ENCODE measurements at regions of chr2 and their contacts with region 1.

Region 1: GRCh38 chr2:47034973-47035609 is 119.5 kb upstream of the MCFD2 start:
- DNase-seq: peak in 1 of 5 donors; percentile 50
- H3K4me3 ChIP-seq: no peak overlapping the region
- H3K27ac ChIP-seq: peak overlapping the region; percentile 50 to 82
- H3K4me1 ChIP-seq: peaks cover 22% of the 10 kb centered on the region
- H3K27me3 ChIP-seq: no peaks in the 10 kb centered on the region
- CTCF ChIP-seq: no peak
- EP300 ChIP-seq: no peak
- POLR2A ChIP-seq: no peak

Region 2: DNA sequence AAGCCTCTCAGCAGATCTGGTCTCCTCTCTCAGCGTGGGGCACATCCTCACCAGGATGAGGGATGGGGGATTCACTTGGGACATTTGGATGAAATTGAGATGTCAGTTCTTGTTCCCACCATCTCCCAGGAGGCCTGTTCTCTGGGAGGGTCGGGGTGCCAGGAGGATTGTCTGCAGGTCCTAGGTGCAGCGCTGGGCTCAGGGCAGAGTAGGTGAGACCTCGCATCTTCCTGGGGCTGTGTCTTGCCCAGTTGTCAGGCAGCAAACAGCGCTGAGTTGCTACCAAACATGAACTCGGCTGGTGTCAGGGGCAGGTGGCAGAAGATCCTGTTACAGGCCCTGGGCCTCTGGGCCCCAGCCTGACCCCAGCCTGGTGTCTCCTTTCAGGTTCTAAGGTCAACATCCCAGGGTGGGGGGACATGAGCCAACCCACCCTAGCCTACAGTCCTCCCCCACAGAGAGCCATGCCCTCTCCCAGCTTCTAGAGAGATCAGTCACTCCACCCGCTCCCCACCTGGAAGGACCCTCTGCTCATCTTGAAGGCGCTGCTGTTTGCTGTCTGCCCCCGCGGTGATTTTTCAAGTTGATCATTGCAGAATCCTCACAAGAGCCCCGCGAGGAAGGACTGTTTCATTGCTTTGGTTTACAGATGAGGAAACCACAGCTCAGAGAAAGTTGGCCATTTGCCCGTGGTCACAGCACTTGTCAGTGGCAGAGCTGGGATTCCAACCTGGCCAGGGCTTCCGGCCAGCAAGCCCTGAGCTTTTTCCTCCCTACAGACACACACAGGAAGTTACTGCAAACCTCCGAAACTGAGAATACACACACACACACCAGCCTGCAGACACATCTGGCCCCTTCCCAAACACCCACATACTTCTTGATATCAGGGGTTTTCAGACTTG is 36.1 kb after region 1 on chr2:
- intact Hi-C with region 1: loop called in 1 of 4 experiments (anchors 5 kb)
- DNase-seq: peak; percentile 61 to 75 (median 66)
- H3K4me3 ChIP-seq: no peak overlapping the region
- H3K27ac ChIP-seq: peak overlapping the region; percentile 90 to 91
- H3K4me1 ChIP-seq: peaks cover 39% of the 10 kb centered on the region
- H3K27me3 ChIP-seq: no peaks in the 10 kb centered on the region
- CTCF ChIP-seq: no peak
- EP300 ChIP-seq: no peak
- POLR2A ChIP-seq: no peak

Region 3: GRCh38 chr2:47127862-47128543 is 92.9 kb after region 1 on chr2:
- intact Hi-C with region 1: no loop called
- DNase-seq: no peak
- H3K4me3 ChIP-seq: no peak overlapping the region
- H3K27ac ChIP-seq: no peak overlapping the region
- H3K4me1 ChIP-seq: no peaks in the 10 kb centered on the region
- H3K27me3 ChIP-seq: no peaks in the 10 kb centered on the region
- CTCF ChIP-seq: no peak
- EP300 ChIP-seq: no peak
- POLR2A ChIP-seq: no peak

Region 4: GRCh38 chr2:47198985-47199451 is 163.9 kb after region 1 on chr2:
- intact Hi-C with region 1: no loop called
- DNase-seq: no peak
- H3K4me3 ChIP-seq: no peak overlapping the region
- H3K27ac ChIP-seq: no peak overlapping the region
- H3K4me1 ChIP-seq: peaks cover 6% of the 10 kb centered on the region
- H3K27me3 ChIP-seq: no peaks in the 10 kb centered on the region
- CTCF ChIP-seq: no peak
- EP300 ChIP-seq: no peak
- POLR2A ChIP-seq: no peak

Measured in ovary (tissue), 10 donors.